ENCODE measurements at regions of chr7 and their contacts with region 1.

Region 1: DNA sequence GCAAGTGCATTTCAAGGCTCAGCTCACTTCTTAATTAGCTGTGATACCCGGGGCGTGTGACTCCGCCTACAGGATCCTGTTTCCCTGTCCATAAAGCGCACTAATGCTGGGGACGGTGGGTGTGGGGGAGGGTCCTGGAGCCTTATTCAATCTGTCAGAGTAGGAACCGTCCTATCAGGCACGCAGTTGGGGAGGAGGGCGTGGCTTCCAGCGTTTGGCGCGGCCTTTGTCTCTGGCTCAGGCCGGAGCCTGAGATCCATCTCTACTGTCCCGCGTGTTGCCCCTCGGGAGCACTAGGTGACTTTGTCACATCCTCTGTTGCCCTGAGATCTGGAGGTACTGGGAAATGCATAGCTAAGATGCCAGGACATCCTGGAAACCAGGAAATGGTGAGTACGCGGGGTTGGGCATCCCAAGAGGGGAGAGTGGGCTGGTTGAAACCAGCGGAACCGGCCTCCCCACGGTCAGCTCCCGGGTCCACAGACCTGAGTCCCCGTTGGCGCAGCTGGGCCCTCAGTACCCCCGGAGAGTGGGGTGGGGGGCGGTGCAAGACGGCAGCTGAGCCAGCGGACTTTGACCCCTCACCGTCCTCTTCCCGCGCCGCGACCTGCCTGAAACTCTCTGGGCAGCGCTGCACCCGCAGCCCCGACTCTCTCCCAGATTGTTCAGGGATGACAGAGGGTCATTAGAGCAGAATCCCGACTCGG is 104.4 kb upstream of the ZNF92 start:
- DNase-seq: peak; percentile 58
- ATAC-seq: peak; percentile 96
- H3K4me3 ChIP-seq: peak overlapping the region; percentile 31
- H3K27ac ChIP-seq: no peak overlapping the region
- H3K4me1 ChIP-seq: no peaks in the 10 kb centered on the region
- H3K27me3 ChIP-seq: no peaks in the 10 kb centered on the region
- CTCF ChIP-seq: no peak
- POLR2A ChIP-seq: no peak
- RAD21 ChIP-seq: no peak

Region 2: DNA sequence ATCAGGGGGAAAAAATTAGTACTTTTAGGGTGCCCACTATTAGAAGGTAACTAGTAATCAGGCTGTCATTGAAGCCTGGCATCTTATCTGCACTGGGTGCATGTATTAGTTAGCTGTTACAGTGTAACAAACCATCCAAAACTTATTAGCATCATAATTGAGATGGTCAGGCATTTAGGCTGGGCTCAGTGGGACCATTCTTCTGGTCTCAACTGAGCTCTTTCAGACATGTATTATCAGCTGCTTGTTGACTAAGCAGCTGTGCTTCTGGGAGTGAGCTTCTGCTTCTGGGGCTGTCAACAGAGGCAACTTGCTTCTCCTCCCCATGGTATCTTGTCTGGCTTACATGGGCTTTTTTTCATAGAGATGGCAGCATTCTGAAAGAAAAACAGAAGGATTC is 49.7 kb before region 1 on chr7:
- CTCF ChIA-PET with region 1: interaction called, 7 read pairs
- POLR2A ChIA-PET with region 1: no interaction called
- dilution Hi-C with region 1: no loop called
- in situ Hi-C with region 1: no loop called
- intact Hi-C with region 1: loop called (anchors 5 kb)
- DNase-seq: no peak
- ATAC-seq: no peak
- H3K4me3 ChIP-seq: no peak overlapping the region
- H3K27ac ChIP-seq: no peak overlapping the region
- H3K4me1 ChIP-seq: no peaks in the 10 kb centered on the region
- H3K27me3 ChIP-seq: no peaks in the 10 kb centered on the region
- CTCF ChIP-seq: no peak
- POLR2A ChIP-seq: no peak
- RAD21 ChIP-seq: no peak

Region 3: DNA sequence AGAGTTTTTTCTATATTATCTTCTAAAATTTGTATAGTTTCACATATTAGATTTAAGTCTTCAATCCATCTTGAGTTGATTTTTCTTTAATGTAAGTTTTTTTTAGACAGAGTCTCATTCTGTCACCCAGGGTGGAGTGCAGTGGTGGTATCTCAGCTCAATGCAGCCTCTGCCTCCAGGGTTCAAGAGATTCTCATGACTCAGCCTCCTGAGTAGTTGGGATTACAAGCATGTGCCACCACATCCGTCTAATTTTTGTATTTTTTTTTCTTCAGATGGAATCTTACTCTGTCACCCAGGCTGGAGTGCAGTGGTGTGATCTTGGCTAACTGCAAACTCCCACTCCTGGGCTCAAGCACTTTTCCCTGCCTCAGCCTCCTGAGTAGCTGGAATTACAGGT is 39.1 kb before region 1 on chr7:
- CTCF ChIA-PET with region 1: no interaction called
- POLR2A ChIA-PET with region 1: no interaction called
- dilution Hi-C with region 1: no loop called
- in situ Hi-C with region 1: no loop called
- intact Hi-C with region 1: no loop called
- DNase-seq: no peak
- ATAC-seq: no peak
- H3K4me3 ChIP-seq: no peak overlapping the region
- H3K27ac ChIP-seq: no peak overlapping the region
- H3K4me1 ChIP-seq: no peaks in the 10 kb centered on the region
- H3K27me3 ChIP-seq: peaks cover 1% of the 10 kb centered on the region; the same call in 1 of the 2 replicates
- CTCF ChIP-seq: no peak
- POLR2A ChIP-seq: no peak
- RAD21 ChIP-seq: no peak